ENCODE measurements at regions of chr2 and their contacts with region 1.

Region 1: DNA sequence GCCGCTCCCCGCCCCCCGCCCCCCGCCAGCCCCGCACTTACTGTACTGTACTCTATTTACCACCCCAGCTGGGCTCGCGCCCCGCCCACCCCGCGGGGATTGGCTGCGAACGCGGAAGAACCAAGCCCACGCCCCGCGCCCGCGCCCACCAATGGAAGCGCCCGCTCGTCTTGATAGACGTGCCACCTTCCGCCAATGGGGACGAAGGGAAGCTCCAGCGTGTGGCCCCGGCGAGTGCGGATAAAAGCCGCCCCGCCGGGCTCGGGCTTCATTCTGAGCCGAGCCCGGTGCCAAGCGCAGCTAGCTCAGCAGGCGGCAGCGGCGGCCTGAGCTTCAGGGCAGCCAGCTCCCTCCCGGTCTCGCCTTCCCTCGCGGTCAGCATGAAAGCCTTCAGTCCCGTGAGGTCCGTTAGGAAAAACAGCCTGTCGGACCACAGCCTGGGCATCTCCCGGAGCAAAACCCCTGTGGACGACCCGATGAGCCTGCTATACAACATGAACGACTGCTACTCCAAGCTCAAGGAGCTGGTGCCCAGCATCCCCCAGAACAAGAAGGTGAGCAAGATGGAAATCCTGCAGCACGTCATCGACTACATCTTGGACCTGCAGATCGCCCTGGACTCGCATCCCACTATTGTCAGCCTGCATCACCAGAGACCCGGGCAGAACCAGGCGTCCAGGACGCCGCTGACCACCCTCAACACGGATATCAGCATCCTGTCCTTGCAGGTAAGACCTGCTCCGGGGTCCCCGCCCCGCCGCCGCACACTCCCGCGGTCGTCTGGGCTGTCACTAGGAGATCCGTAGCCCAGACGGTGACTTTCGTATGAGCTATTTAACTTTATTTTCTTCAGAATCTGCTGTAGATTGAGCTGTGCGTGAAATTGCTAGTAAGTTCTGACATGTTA is at the start of gene ID2:
- DNase-seq: peak; percentile 99
- ATAC-seq: peak; percentile 41
- H3K4me3 ChIP-seq: peak within 1 kb of the TSS; percentile 88
- H3K27ac ChIP-seq: peak within 1 kb of the TSS; percentile 16
- H3K4me1 ChIP-seq: peaks cover 42% of the 10 kb centered on the region
- H3K27me3 ChIP-seq: no peaks in the 10 kb centered on the region
- CTCF ChIP-seq: no peak
- total RNA-seq, gene ID2: 92.1 and 93.3 TPM in 2 replicates

Region 2: GRCh38 chr2:7411691-7412090 is 1270.3 kb before region 1 on chr2:
- CTCF ChIA-PET with region 1: no interaction called
- POLR2A ChIA-PET with region 1: no interaction called
- intact Hi-C with region 1: loop called (anchors 5 kb)
- DNase-seq: no peak
- ATAC-seq: no peak
- H3K4me3 ChIP-seq: no peak overlapping the region
- H3K27ac ChIP-seq: no peak overlapping the region
- H3K4me1 ChIP-seq: no peaks in the 10 kb centered on the region
- H3K27me3 ChIP-seq: no peaks in the 10 kb centered on the region
- CTCF ChIP-seq: no peak

Region 3: DNA sequence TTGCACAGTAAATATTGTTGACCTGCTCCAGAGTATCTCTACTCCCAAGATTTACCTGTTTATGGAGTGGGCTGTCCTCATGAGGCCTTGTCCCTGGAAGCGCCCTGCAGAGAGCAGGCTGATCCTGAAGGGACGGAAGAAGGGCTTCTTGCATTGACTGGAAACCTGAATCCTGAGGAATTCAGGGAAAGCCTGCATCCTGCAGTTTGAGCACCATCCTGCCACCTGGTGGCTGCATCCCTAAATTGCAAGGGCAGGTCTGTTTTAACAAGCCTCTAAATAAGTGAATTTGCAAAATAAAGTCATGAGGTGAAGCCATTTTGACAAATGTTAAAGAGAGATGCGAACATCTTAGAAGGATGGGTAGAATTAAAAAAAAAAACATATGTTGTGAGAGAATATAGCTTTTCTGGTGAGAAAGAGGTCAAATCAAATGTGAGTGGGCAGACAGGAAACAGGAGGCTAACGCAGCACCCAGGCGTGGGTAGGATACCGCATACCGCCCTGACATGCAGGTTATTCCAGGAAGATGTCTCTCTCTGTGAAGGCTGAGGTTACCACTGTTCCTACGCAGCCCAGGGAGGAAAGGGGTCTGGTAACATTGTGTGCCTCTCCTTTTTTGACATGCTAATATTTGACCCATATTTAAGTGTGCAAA is 1009.9 kb before region 1 on chr2:
- CTCF ChIA-PET with region 1: no interaction called
- POLR2A ChIA-PET with region 1: no interaction called
- intact Hi-C with region 1: loop called (anchors 5 kb)
- DNase-seq: peak; percentile 88
- ATAC-seq: peak; percentile 74
- H3K4me3 ChIP-seq: no peak overlapping the region
- H3K27ac ChIP-seq: no peak overlapping the region
- H3K4me1 ChIP-seq: 0 out of 2 replicates have a peak, but pooled peaks cover 6% of the 10 kb centered on the region
- H3K27me3 ChIP-seq: no peaks in the 10 kb centered on the region
- CTCF ChIP-seq: peak; percentile 92

Region 4: DNA sequence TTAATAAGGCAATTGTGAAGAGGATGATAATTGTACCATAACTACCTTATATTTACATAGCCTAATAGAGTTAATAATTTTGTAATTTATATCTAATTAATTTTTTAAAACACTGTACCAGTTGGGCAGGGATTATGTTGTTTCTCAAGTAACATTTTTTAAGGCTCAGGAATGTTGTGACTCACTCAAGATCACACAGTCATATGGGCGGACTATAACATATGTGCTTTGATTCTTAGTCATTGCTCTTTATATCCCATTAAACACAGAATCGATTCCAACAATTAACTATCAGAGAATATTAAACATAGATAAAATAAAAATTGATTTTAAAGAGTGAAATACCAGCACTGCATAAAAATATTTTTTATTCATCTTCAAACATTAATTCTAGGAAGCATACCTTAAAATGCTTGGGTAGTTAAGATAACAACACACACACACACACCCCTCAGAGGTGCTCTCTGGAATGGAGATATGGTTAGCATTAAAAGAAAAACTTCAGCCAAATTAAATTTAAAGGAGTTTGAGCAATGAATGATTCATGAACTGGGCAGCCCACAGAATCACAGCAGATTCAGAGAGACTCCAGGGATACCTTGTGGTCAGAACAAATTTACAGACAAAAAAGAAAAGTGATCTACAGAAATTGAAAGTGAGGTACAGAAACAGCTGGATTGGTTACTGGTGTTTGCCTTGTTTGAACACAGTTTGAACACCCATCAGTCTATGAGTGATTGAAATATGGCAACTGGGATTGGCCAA is 869.6 kb before region 1 on chr2:
- CTCF ChIA-PET with region 1: no interaction called
- POLR2A ChIA-PET with region 1: no interaction called
- intact Hi-C with region 1: loop called (anchors 5 kb)
- DNase-seq: peak; percentile 88
- ATAC-seq: peak; percentile 91
- H3K4me3 ChIP-seq: peak overlapping the region; percentile 3; the same call in 1 of the 2 replicates
- H3K27ac ChIP-seq: peak overlapping the region; percentile 94
- H3K4me1 ChIP-seq: peaks cover 35% of the 10 kb centered on the region
- H3K27me3 ChIP-seq: no peaks in the 10 kb centered on the region
- CTCF ChIP-seq: no peak

Region 5: DNA sequence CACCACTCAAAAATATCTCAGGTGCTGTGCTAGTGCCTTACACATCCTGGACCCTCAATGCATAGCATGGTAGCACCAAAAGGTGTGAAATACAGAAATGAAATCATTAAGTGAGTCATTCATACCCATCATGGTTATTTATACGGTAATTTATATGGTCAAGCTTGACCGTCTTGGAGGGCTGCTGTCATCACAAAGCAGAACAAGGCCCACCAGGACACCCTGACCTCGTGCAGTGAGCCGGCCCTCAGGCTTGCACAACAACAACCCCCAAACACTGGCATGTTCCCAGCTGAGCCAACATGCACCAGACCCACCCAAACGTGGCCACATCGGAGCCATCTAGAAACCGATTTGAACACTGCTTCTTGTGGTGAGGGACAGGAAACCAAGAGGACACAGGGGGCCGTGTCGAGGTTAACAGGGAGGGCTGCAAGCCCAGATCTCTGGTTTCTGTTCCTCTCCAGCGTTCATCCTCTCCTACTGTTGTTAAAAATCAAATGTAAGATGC is 378.7 kb before region 1 on chr2:
- CTCF ChIA-PET with region 1: no interaction called
- POLR2A ChIA-PET with region 1: no interaction called
- intact Hi-C with region 1: loop called (anchors 2 kb)
- DNase-seq: no peak
- ATAC-seq: no peak
- H3K4me3 ChIP-seq: no peak overlapping the region
- H3K27ac ChIP-seq: no peak overlapping the region
- H3K4me1 ChIP-seq: peaks cover 43% of the 10 kb centered on the region
- H3K27me3 ChIP-seq: no peaks in the 10 kb centered on the region
- CTCF ChIP-seq: no peak

Region 6: GRCh38 chr2:8488001-8488738 is 193.9 kb before region 1 on chr2:
- CTCF ChIA-PET with region 1: no interaction called
- POLR2A ChIA-PET with region 1: no interaction called
- intact Hi-C with region 1: loop called (anchors 5 kb)
- DNase-seq: no peak
- ATAC-seq: no peak
- H3K4me3 ChIP-seq: no peak overlapping the region
- H3K27ac ChIP-seq: no peak overlapping the region
- H3K4me1 ChIP-seq: peaks cover 4% of the 10 kb centered on the region
- H3K27me3 ChIP-seq: no peaks in the 10 kb centered on the region
- CTCF ChIP-seq: no peak

Region 7: GRCh38 chr2:8598295-8599165 is 83.5 kb before region 1 on chr2:
- CTCF ChIA-PET with region 1: no interaction called
- POLR2A ChIA-PET with region 1: no interaction called
- intact Hi-C with region 1: no loop called
- DNase-seq: peak; percentile 96
- ATAC-seq: peak; percentile 91
- H3K4me3 ChIP-seq: no peak overlapping the region
- H3K27ac ChIP-seq: peak overlapping the region; percentile 68
- H3K4me1 ChIP-seq: peaks cover 22% of the 10 kb centered on the region
- H3K27me3 ChIP-seq: no peaks in the 10 kb centered on the region
- CTCF ChIP-seq: peak; percentile 19; the same call in 1 of the 2 replicates

Region 8: DNA sequence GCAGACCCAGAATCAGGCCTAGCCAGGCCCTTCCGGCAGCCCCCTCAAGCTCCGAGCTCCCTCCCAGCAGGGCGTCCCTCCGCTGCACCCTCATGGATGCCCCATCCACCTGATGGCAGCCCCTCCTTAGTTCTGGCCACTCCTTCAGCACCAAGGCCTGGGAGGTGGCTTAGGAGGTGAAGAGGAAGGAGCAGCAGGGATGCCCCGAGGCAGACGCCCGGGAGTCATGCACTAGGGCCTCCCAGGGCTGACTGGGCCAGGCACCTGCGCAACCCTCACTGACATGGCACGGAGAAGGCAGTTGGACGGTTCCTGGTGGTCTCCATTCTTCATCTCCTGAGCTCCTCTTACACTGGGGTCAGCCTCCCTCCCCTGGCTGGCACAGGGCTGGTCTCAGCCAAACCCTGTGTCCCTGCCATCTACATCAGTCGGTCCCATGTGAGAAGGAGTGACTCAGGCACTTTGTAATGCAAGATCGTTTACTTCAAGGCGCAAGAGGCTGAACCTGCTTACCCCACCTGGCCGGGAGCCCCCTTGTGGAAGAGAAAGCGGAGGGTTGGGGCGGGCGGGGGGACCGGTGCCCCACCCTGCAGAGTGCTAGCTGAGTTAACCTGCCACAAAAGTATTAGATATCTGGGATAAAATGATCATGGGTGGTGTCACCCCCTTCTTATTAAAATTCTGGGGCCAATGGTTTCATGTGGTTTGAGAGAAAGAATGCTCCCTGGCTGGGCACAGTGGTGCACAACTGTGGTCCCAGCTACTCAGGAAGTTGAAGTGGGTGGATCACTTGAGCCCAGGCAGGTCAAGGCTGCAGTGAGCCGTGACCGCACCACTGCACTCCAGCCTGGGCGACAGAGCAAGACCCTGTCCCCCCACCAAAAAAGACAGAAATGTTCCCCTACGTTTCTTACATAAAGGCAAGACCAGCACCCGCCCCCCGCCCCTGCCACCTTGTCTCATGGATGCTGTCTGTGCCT is 53.5 kb before region 1 on chr2:
- CTCF ChIA-PET with region 1: no interaction called
- POLR2A ChIA-PET with region 1: no interaction called
- intact Hi-C with region 1: loop called (anchors 5 kb)
- DNase-seq: peak; percentile 39
- ATAC-seq: no peak
- H3K4me3 ChIP-seq: no peak overlapping the region
- H3K27ac ChIP-seq: no peak overlapping the region
- H3K4me1 ChIP-seq: peaks cover 37% of the 10 kb centered on the region
- H3K27me3 ChIP-seq: no peaks in the 10 kb centered on the region
- CTCF ChIP-seq: 0 out of 2 replicates have a peak, but pooled peaks have one; percentile 13

Measured in PC-3 (cell line).